ENCODE measurements at regions of chr3 and their contacts with region 1.

Region 1: DNA sequence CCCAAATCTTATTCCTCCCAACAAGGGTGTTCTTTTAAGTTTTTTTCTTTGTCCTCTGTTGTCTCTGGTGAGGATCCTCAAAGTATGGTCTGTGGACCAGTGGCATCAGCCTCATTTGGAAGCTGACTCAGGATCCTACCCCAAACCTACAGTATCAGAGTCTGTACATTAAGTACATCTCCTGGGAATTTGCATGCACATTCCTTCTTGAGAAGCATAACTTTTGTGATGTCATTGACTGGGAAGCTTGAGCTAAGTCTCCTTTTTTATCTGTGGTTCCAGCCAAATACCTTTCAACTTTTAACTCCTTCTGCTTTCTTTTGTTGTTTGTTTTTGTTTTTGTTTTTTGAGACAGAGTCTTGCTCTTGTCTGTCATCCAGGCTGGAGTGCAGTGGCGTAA is 40.5 kb downstream of the ARMC8 start:
- DNase-seq: no peak
- H3K4me3 ChIP-seq: no peak overlapping the region
- H3K27ac ChIP-seq: no peak overlapping the region
- H3K4me1 ChIP-seq: peaks cover 2 to 7% (median 4%) of the 10 kb centered on the region in 4 experiments
- H3K27me3 ChIP-seq: no peaks in the 10 kb centered on the region

Region 2: DNA sequence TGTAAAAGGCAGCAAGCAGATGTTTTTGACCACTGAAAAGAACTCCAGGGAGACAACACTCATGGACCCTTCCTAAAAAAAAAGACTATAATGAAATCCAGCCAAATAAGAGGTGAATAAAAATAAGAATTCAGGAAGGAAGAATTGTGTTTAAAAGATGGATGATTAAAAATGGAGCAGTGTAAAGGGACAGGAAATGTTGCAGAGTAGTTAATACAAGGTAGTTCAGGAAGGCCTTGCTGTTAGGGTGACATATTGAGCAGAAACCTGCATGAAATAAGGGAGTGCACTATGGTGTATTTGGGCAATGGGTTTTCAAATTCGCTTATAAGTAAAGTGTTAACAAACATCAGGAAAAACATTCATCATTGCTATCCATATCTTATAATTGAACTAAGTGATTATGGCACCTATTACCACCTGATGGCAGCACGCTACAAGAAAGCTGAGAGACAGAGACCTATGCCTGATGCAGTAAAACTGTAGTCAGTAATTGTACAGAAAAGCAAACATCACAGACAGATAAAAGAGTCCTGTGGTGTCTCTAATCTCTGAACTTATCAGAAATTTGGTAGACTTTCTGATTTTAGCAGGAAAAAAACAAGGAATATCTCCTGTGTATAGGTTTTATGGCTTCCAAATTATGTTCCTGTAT is 47.1 kb before region 1 on chr3:
- CTCF ChIA-PET with region 1: interaction called, 24 read pairs
- POLR2A ChIA-PET with region 1: no interaction called
- DNase-seq: peak; percentile 49 to 62 (median 56)
- H3K4me3 ChIP-seq: no peak overlapping the region
- H3K27ac ChIP-seq: no peak overlapping the region
- H3K4me1 ChIP-seq: no peaks in the 10 kb centered on the region
- H3K27me3 ChIP-seq: no peaks in the 10 kb centered on the region

Region 3: GRCh38 chr3:138256022-138256421 is 28.4 kb after region 1 on chr3:
- CTCF ChIA-PET with region 1: no interaction called
- POLR2A ChIA-PET with region 1: no interaction called
- DNase-seq: no peak
- H3K4me3 ChIP-seq: no peak overlapping the region
- H3K27ac ChIP-seq: no peak overlapping the region
- H3K4me1 ChIP-seq: no peaks in the 10 kb centered on the region
- H3K27me3 ChIP-seq: no peaks in the 10 kb centered on the region